HEK293T (cell line): ENCODE measurements at regions of chr3 and their contacts with region 1.

Region 1: DNA sequence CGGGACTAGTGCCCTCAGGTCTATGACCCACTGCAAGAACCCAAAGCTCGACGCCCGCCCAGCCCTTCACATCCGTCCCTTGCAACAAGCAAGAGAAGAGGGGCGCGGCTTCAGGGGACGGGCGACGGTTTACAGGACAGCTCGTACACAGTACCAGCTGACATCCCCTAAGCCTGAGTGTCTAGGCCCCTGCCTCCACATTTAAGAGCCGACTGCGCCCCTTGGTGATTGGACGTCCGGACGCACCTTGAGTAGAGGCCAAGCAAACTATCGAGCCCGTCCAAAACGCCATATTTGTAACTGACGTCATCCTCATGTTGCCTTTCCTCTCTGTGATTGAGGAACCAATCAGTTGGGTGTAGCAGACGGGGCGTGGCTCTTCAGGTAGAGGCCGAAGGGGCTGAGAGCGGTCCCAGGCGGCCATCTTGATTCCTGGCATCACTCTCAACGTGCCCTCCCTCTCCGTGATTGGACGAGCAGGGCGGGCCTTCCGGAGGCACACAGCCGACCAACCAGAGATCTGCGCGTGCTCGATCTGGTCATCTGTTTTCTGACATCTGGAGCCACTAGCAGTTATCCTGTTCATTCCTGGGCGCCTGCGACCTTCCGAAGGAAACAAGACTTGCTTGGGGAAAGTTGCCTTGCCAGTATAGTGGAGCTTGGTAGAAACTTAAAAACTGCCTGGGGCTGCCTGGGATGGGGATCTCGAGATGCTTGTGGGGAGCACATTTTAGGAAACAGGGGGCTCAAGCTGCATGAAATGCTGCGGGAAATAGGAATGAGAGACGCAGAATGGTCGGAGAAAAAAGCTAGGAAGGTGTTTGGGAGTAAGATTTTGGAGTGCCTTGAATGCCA is 4.0 kb upstream of the RPL14 start:
- DNase-seq: peak; percentile 94

Region 2: DNA sequence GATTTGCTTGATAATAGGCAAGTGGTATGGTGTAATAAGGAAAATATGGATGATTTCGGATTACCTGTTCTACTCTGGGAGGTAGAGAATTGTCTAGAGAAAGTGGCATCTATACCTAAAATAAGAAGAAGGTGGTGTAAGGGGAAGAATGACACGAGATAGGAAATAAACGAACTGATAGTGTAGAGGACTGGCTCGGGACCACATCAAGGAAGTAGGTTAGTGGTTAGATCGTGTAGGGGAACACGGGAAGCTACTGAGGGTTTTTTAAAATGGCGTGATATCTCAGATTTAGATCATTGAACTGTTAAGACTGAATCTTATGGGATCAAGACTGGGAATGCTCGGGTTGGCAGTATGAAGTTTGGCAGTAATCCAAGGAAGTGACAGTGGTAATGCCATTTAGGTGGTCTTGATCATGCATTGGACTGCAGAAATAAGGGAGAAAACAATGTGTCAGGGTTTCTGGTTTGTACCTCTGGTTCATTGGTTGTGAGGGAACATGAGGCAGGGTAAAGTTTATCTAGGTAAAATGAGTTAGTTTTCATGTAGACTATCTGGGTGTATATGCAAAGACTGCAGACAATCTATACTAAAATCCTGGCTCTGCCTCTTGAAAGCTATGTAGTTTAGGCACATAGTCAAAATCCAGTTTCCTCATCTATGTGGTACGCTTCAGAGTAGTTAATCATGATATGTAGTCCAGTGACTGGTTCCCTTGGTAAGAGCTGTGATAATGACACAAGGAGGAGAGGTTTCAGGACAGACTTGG is 11.4 kb after region 1 on chr3:
- CTCF ChIA-PET with region 1: no interaction called
- POLR2A ChIA-PET with region 1: interaction called, 11 read pairs
- DNase-seq: no peak

Region 3: GRCh38 chr3:40476478-40477470 is 23.7 kb after region 1 on chr3 and contains the start of gene ZNF619:
- CTCF ChIA-PET with region 1: no interaction called
- POLR2A ChIA-PET with region 1: interaction called, 10 read pairs
- DNase-seq: peak; percentile 50